ENCODE measurements at regions of chr15 and their contacts with region 1.

Region 1: DNA sequence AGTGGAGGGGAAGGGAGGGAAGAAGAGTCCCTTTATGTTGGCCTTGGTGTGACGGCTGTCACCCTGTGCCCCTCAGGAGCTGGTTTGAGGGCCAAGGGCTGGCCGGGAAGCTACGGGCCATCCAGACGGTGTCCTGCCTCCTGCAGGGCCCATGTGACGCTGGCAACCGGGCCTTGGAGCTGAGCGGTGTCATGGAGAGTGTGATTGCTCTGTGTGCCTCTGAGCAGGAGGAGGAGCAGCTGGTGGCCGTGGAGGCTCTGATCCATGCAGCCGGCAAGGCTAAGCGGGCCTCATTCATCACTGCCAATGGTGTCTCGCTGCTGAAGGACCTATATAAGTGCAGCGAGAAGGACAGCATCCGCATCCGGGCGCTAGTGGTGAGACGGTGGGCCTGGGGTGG is 8.1 kb upstream of the RCCD1 start:
- DNase-seq: no peak
- ATAC-seq: no peak
- H3K4me3 ChIP-seq: no peak overlapping the region
- H3K27ac ChIP-seq: no peak overlapping the region; the same call in 2 of the 3 replicates
- H3K4me1 ChIP-seq: peaks cover 13 to 32% of the 10 kb centered on the region in 2 experiments; a peak in 4 of 5 replicates
- H3K27me3 ChIP-seq: no peaks in the 10 kb centered on the region
- CTCF ChIP-seq: no peak
- EP300 ChIP-seq: no peak
- POLR2A ChIP-seq: no peak
- RAD21 ChIP-seq: no peak

Region 2: DNA sequence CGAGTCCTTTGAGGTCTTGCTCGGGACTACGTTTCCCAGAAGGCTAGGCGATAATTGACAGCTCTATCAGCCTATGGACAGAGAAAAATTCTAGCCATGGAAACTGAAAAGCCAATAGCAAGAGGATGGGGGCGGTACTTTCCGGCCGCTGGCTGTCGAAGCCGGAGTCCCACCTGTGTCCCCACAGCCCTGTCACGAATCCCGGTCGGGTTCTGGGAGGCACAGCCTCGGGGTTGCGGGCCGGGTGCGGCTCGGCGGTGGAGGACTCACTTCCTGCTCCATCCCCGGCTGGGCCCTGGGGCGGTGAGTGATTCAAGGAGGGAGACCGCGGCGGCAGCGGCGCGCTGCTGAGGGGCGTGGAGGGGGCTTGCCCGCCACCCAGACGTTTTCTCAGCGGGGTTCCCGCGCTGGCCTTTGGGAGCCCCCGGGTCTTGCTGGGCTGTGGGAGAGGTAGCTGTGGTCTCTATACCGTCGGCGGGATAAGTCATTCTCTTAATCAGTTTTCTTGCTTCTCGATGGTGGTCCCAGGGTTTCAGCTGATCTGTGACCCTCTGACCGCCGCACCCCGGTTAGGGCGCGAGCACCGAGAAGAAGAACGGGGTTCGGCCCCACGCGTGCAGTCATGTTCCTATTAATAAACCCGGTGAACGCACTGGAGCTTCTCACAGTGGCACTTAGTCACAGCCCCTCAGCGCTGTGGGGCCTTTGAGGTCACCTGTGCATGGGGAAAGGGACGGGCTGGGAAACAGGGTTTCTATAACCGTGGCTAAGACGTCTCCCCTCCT is 594.2 kb before region 1 on chr15 and contains the start of gene ZNF774:
- CTCF ChIA-PET with region 1: no interaction called
- POLR2A ChIA-PET with region 1: no interaction called
- in situ Hi-C with region 1: no loop called
- intact Hi-C with region 1: no loop called
- DNase-seq: peak; percentile 94 to 100 (median 96)
- ATAC-seq: peak; percentile 99
- H3K4me3 ChIP-seq: peak within 1 kb of the TSS; percentile 65
- H3K27ac ChIP-seq: peak within 1 kb of the TSS; percentile 51; the same call in 2 of the 3 replicates
- H3K4me1 ChIP-seq: peaks cover 3 to 13% of the 10 kb centered on the region in 2 experiments; a peak in 4 of 5 replicates
- H3K27me3 ChIP-seq: no peaks in the 10 kb centered on the region
- CTCF ChIP-seq: no peak
- EP300 ChIP-seq: no peak
- POLR2A ChIP-seq: peak; percentile 79
- RAD21 ChIP-seq: no peak
- polyA plus RNA-seq, gene ZNF774: 0.32 to 0.34 TPM

Region 3: DNA sequence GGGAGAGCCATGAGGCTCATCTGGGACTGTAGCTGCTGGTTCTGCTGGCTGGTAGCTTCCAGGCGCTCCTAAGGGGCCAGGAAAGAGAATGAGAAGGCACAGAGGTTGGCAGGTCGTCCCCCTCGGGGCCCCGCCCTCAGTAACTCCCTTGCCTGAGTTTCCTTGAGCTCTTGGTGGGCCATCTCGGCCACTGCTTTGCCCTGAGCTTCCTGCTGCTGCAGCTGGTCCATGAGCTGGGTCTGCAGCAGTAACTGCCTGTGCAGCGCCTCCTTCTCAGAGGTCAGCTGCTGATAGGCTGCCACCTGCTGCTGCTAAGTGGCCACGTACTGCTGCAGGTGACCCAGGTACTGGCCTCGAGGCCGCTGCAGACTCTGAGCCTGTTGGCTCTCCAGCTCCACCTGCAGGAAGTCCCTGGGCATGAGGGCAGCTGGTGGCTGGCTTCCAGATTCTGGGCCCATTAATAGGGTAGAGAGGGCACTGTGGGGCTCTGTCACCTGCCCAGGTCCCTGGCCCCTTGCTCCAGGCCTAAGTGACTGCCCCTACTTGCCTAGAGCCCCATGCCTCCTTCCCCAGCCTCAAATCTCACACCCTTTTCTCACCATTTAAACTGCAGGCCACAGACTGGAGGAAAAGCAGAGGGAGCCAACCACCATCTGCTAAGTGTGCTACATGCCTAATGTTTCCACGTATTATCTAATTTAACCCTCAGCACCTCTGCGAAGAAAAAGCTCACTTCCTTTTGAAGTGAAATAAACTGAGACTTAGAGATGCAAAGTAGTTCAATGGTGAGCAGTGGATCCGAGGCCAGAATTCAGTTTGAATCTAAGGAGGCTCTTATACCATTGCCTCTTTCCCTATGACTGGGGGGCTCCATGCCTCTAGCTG is 86.6 kb after region 1 on chr15:
- CTCF ChIA-PET with region 1: no interaction called
- POLR2A ChIA-PET with region 1: no interaction called
- in situ Hi-C with region 1: no loop called
- intact Hi-C with region 1: loop called (anchors 5 kb)
- DNase-seq: peak; percentile 68 to 84 (median 74)
- ATAC-seq: peak; percentile 92
- H3K4me3 ChIP-seq: no peak overlapping the region
- H3K27ac ChIP-seq: no peak overlapping the region
- H3K4me1 ChIP-seq: peaks cover 0 to 22% of the 10 kb centered on the region in 2 experiments; a peak in 3 of 5 replicates
- H3K27me3 ChIP-seq: peaks cover 2 to 4% of the 10 kb centered on the region in 2 experiments; a peak in 3 of 5 replicates
- CTCF ChIP-seq: peak; percentile 85 to 90 (median 90)
- EP300 ChIP-seq: no peak
- POLR2A ChIP-seq: no peak
- RAD21 ChIP-seq: peak; percentile 68 to 90

Region 4: DNA sequence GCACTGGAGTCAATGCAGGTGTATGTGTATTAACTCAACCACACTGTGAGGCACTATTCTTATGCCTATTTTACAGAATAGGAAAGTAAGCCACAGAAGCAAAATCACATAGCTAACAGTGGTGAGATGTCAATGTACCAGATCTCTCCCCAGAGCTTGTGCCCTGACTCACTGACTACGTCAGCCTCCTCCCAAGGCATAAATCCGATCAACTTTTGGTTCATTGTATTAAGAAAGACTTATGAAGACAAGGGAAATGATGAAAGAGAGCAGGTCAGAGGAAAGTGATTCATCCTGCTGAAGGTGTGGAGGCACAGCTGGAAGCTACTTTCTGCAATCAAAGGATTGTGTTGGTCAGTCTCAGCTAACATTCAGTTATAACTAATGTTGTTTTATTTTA is 120.5 kb after region 1 on chr15:
- CTCF ChIA-PET with region 1: no interaction called
- POLR2A ChIA-PET with region 1: no interaction called
- in situ Hi-C with region 1: no loop called
- intact Hi-C with region 1: no loop called
- DNase-seq: no peak
- ATAC-seq: no peak
- H3K4me3 ChIP-seq: no peak overlapping the region
- H3K27ac ChIP-seq: no peak overlapping the region
- H3K4me1 ChIP-seq: no peaks in the 10 kb centered on the region
- H3K27me3 ChIP-seq: peaks cover 4 to 11% of the 10 kb centered on the region in 2 experiments; a peak in 2 of 5 replicates
- CTCF ChIP-seq: no peak
- EP300 ChIP-seq: no peak
- POLR2A ChIP-seq: no peak
- RAD21 ChIP-seq: no peak

Measured in K562 (cell line).